ENCODE measurements at regions of chr11 and their contacts with region 1.

Region 1: GRCh38 chr11:12050470-12051286 is 42.3 kb upstream of the DKK3 start:
- DNase-seq: no peak
- ATAC-seq: no peak
- H3K4me3 ChIP-seq: no peak overlapping the region
- H3K4me3 Mint-ChIP-seq: no peak overlapping the region
- H3K27ac ChIP-seq: no peak overlapping the region
- H3K27ac Mint-ChIP-seq: no peak overlapping the region
- H3K4me1 ChIP-seq: no peaks in the 10 kb centered on the region
- H3K4me1 Mint-ChIP-seq: no peaks in the 10 kb centered on the region
- H3K27me3 ChIP-seq: no peaks in the 10 kb centered on the region
- H3K27me3 Mint-ChIP-seq: peaks cover 9% of the 10 kb centered on the region
- CTCF ChIP-seq: no peak

Region 2: GRCh38 chr11:11960687-11961086 is 90.0 kb before region 1 on chr11:
- CTCF ChIA-PET with region 1: no interaction called
- POLR2A ChIA-PET with region 1: no interaction called
- intact Hi-C with region 1: no loop called
- DNase-seq: no peak
- ATAC-seq: no peak
- H3K4me3 ChIP-seq: no peak overlapping the region
- H3K4me3 Mint-ChIP-seq: no peak overlapping the region
- H3K27ac ChIP-seq: no peak overlapping the region
- H3K27ac Mint-ChIP-seq: no peak overlapping the region
- H3K4me1 ChIP-seq: no peaks in the 10 kb centered on the region
- H3K4me1 Mint-ChIP-seq: peaks cover 10% of the 10 kb centered on the region
- H3K27me3 ChIP-seq: peaks cover 0 to 4% (median 0%) of the 10 kb centered on the region in 4 experiments
- H3K27me3 Mint-ChIP-seq: no peaks in the 10 kb centered on the region
- CTCF ChIP-seq: no peak

Region 3: DNA sequence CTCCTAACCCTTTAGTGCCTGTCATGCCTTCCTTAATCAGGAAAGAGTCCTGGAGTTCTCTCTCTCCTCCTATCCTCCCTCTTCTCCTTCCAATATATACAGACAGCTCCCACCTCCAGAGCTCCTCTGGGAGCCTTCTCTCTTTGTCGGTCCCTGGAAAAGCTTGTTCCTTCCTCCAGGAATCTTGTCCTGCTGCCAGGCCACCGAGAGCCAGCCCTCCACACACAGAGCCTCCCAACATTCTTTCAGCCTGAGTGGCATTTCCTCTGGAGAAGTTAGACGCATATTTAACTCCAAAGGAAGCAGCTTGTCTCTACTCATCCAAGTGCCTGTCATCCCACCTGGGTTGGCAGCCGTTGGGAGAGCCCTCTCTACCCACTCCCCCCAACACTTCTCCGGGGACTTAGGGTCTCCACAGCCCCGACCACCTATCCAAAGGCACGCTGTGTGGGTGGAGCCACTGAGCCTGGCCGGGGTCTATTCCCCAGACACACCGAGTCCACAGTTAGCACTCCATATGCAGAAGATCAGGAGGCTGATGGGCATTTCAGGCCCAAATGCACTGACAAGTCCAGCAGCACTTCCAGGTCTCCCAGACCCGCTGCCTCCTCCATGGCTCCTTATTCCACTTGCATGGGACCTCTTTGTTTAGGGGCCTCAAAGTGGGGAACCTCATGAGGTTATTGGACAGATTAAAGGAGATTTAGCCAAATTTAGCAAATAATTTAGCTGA is 73.3 kb before region 1 on chr11:
- CTCF ChIA-PET with region 1: no interaction called
- POLR2A ChIA-PET with region 1: no interaction called
- intact Hi-C with region 1: no loop called
- DNase-seq: no peak
- ATAC-seq: no peak
- H3K4me3 ChIP-seq: no peak overlapping the region
- H3K4me3 Mint-ChIP-seq: no peak overlapping the region
- H3K27ac ChIP-seq: no peak overlapping the region
- H3K27ac Mint-ChIP-seq: no peak overlapping the region
- H3K4me1 ChIP-seq: no peaks in the 10 kb centered on the region
- H3K4me1 Mint-ChIP-seq: no peaks in the 10 kb centered on the region
- H3K27me3 ChIP-seq: peaks cover 0 to 8% (median 0%) of the 10 kb centered on the region in 4 experiments
- H3K27me3 Mint-ChIP-seq: peaks cover 17% of the 10 kb centered on the region
- CTCF ChIP-seq: no peak

Region 4: GRCh38 chr11:12070446-12071267 is 20.0 kb after region 1 on chr11:
- CTCF ChIA-PET with region 1: no interaction called
- POLR2A ChIA-PET with region 1: no interaction called
- intact Hi-C with region 1: no loop called
- DNase-seq: no peak
- ATAC-seq: no peak
- H3K4me3 ChIP-seq: no peak overlapping the region
- H3K4me3 Mint-ChIP-seq: no peak overlapping the region
- H3K27ac ChIP-seq: no peak overlapping the region
- H3K27ac Mint-ChIP-seq: no peak overlapping the region
- H3K4me1 ChIP-seq: no peaks in the 10 kb centered on the region
- H3K4me1 Mint-ChIP-seq: no peaks in the 10 kb centered on the region
- H3K27me3 ChIP-seq: peaks cover 0 to 3% (median 0%) of the 10 kb centered on the region in 4 experiments
- H3K27me3 Mint-ChIP-seq: peaks cover 41% of the 10 kb centered on the region
- CTCF ChIP-seq: no peak

Region 5: DNA sequence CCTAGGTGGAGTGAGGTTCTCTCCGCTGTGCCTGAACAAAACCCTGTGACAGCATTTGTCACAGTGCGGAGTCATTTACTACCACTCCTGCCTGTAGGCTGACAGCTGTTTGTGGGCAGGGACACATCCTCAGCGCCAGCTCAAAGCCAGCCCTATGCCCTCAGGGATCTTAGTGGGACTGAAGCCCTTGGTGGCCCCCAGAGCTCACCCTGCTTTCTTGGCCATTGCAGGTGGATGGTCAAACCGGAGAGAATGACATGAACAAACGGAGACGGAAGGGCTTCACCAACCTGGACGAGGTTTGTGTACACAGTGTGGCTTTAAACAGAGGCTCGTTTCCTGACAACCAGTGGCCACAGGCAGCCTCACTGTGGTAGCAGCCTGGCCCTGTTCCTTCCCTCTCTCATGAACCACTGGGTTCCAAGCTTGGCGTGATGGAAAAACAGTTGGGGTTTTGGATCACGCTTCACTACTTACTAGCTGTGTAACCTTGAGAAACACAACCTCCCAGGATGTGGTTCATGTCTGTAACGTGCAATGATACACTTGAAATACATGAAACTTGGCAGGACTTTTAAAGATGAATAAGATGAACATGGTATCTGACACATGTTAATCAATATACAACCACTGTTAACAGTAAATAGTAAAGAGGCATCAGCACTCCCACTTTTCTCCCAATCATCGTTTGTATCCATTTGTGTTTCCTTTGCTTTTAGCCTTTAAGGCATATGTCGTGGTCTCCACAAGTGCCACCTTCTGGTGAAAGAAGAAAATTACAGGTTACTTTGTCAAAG is 185.5 kb after region 1 on chr11:
- CTCF ChIA-PET with region 1: interaction called, 84 read pairs
- POLR2A ChIA-PET with region 1: no interaction called
- intact Hi-C with region 1: no loop called
- DNase-seq: peak; percentile 48
- ATAC-seq: peak; percentile 47
- H3K4me3 ChIP-seq: no peak overlapping the region
- H3K4me3 Mint-ChIP-seq: no peak overlapping the region
- H3K27ac ChIP-seq: no peak overlapping the region
- H3K27ac Mint-ChIP-seq: no peak overlapping the region
- H3K4me1 ChIP-seq: peaks cover 0 to 4% of the 10 kb centered on the region in 2 donors
- H3K4me1 Mint-ChIP-seq: peaks cover 5% of the 10 kb centered on the region
- H3K27me3 ChIP-seq: peaks cover 0 to 3% (median 0%) of the 10 kb centered on the region in 4 experiments
- H3K27me3 Mint-ChIP-seq: peaks cover 13% of the 10 kb centered on the region
- CTCF ChIP-seq: peak; percentile 85

Region 6: DNA sequence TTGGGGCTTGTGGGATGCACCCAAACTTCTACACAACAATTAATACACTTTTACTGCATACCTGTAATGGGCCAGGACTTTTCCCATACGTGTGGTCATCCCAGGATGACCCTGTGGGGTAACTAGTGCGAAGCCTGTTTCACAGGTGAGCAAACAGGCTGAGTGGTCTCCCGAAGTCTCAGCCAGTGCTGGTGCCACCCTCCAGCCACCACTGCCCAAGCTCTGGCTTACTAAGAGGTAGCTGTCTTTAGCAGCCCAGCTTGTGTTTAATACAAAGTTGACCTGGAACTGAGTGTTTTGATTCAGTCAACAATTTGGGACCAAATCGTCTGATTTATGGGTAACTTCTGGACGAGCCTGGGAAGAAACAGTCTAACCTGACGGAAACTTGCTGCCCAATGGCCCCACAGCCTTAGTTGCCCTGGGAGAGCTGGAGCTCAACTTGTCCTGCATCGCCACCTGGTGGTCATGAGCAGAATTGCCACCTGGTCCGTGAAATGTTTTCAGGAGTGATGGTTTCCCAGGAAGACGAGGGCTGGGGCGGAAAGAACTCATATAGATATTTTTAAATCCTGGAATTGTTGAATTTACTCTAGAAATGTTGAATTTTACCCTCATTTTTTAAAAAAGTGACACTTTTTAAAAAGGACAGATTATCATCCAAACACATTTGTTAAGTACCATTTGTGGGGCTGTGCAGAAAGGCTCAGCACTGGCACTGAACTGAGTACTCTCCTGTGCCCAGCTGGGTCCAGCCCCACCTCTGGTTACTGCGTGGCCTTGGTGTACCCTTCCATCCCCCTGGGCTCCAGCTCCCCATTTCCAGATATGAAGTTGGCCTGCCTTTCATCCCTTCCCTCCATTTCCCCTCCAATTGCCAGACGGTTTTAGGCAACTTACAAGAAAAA is 231.1 kb after region 1 on chr11:
- CTCF ChIA-PET with region 1: interaction called, 15 read pairs
- POLR2A ChIA-PET with region 1: no interaction called
- intact Hi-C with region 1: no loop called
- DNase-seq: peak; percentile 69
- ATAC-seq: peak; percentile 53
- H3K4me3 ChIP-seq: no peak overlapping the region
- H3K4me3 Mint-ChIP-seq: no peak overlapping the region
- H3K27ac ChIP-seq: no peak overlapping the region
- H3K27ac Mint-ChIP-seq: no peak overlapping the region
- H3K4me1 ChIP-seq: no peaks in the 10 kb centered on the region
- H3K4me1 Mint-ChIP-seq: no peaks in the 10 kb centered on the region
- H3K27me3 ChIP-seq: peaks cover 0 to 3% (median 0%) of the 10 kb centered on the region in 4 experiments
- H3K27me3 Mint-ChIP-seq: peaks cover 5% of the 10 kb centered on the region
- CTCF ChIP-seq: peak; percentile 98